ENCODE measurements at regions of chr3 and their contacts with region 1.

Region 1: DNA sequence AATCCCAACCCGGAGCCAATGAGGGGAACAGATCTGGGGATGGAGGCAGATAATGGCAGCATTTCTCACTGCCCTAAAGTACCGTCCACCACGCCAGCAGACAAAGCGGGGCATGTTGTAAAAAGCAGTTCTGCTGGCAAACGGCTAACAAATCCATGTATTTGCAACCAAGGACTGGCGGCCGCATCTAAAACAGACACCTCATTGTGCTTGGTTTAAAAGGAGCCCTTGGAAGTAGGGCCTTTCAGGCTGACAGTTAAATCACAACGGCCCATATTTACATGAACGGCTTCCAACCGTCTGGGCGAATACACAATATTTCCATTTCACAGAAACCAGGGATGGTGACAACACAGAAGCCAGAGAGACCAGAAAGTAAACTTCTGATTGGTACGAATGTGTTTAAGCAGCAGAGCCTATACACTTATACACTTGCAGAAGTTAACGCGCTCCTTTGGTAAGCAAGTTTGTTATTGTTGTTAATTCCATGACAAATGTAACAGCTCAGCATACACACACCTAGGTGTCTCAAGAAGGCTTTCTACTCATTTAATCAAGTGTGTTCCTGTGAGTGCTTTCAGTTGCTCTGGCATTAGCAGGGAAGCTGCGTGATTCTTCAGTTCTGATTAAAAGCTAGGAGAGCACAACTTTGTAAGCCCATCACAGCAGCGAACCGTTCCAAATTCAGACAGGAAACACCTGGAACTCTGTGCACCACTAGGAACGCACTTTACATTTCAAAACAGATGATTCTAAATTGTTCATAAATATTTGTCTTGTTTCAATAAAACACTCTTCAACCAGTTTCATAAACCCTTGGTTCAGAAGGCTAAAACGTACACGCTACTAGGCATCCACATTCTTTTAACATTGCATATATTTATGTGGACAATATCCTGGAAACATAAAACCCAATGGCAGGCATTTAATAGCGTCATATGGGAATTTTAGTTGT is 112.9 kb downstream of the PDZRN3 start:
- DNase-seq: no peak
- H3K4me3 ChIP-seq: no peak overlapping the region
- H3K27ac ChIP-seq: no peak overlapping the region
- H3K4me1 ChIP-seq: peaks cover 20% of the 10 kb centered on the region
- H3K27me3 ChIP-seq: no peaks in the 10 kb centered on the region

Region 2: DNA sequence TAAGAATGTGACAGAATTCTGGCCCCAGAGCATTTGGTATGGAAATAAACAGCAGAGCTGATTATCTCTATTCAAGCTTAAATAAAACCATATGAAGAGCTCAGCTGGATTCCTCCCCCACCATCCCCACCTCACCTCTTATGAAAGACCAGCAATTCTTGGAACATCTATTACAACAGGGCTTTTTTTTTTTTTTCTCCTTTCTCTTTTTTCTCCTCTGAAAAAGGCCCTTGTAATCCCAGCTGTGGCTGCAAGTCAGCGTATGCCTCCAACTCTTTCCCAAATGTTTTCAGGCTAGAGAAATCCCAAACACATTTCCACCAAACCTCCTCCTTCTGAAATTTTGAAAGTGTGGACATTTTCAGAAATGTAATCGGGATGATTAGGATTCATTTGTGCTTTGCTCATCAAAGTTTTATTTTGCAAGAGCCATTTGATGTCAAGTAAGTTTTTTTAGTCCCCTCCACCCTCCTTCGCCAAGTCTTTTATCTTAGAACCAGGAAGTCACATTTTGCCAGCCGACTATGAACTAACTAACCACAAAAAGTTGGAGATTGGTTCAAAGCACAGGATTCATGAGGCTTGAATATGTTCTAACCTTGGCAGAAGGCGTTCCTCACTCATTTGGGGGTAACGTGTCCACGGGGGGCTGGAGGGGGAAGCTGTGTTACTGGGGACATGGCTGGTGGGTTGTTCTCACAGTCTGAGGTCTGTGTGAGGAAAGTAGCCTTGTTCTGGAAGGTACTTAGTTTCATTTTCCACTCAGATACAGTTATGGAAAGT is 254.9 kb after region 1 on chr3:
- in situ Hi-C with region 1: loop called (anchors 10 kb)
- DNase-seq: peak; percentile 84
- H3K4me3 ChIP-seq: peak overlapping the region; percentile 67
- H3K27ac ChIP-seq: peak overlapping the region; percentile 87
- H3K4me1 ChIP-seq: peaks cover 34% of the 10 kb centered on the region
- H3K27me3 ChIP-seq: no peaks in the 10 kb centered on the region